Activated CD8-positive, alpha-beta memory T cell treated with anti-CD3 and anti-CD28 coated beads, Interleukin-2, amount 10 ng/mL, durations not matched to agents 7 days and 5 days (primary cell): ENCODE measurements at regions of chr3 and their contacts with region 1.

Region 1: DNA sequence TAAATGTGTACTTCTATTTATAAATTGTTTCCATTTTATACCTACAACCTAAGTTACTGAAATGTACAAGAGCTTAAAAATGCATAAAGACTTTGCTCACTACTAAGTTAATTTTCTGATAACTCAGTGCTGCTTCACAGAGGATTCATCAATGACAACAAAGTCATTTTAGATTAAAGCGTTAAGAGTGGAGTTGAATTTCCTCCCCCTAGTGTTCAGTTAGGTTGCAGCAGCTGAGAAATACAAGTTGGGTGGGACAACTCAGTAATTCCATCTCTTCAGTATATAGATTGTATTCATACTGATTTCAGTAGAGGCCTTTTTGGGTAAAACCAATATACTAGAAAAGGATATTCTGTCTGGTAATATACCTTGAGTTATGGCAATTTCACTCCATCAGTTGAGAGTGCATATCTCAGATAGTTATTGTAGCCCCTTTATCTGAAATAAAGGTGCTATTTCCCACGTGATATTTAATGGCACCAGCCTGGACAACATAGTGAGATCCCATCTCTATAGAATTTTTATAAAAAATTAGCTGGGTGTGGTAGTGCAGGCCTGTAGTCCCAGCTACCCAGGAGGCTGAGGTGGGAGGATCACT is 6.9 kb upstream of the RPL35A start:
- DNase-seq: no peak
- ATAC-seq: peak; percentile 86
- H3K4me3 Mint-ChIP-seq: no peak overlapping the region
- H3K27ac Mint-ChIP-seq: no peak overlapping the region
- H3K4me1 Mint-ChIP-seq: peaks cover 5% of the 10 kb centered on the region
- H3K27me3 Mint-ChIP-seq: no peaks in the 10 kb centered on the region

Region 2: GRCh38 chr3:197906023-197906849 is 36.8 kb before region 1 on chr3:
- CTCF ChIA-PET with region 1: interaction called, 41 read pairs
- DNase-seq: peak; percentile 90
- ATAC-seq: peak; percentile 90
- H3K4me3 Mint-ChIP-seq: peak overlapping the region; percentile 22
- H3K27ac Mint-ChIP-seq: peak overlapping the region; percentile 44
- H3K4me1 Mint-ChIP-seq: peaks cover 20% of the 10 kb centered on the region
- H3K27me3 Mint-ChIP-seq: no peaks in the 10 kb centered on the region

Region 3: DNA sequence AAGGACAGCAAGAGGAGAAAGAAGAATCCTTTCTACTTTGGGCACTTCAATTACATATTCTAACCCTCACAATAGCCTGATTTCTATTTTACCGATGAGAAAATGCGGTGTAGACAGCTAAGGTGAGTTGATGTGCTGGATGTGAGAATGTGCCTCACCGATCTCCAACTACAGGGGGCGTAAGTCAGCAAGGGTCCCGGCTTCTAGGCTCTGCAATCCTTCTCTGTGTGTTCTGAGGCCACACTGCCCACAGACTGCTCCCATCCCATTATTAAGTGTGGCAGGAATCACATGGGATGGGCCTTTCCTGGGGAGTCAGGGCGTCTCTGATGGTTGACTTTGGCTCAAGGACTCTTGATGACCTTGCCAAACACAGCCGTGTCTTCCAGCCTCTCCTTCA is 16.6 kb before region 1 on chr3:
- CTCF ChIA-PET with region 1: interaction called, 12 read pairs
- DNase-seq: no peak
- ATAC-seq: no peak
- H3K4me3 Mint-ChIP-seq: no peak overlapping the region
- H3K27ac Mint-ChIP-seq: no peak overlapping the region
- H3K4me1 Mint-ChIP-seq: peaks cover 10% of the 10 kb centered on the region
- H3K27me3 Mint-ChIP-seq: no peaks in the 10 kb centered on the region

Region 4: GRCh38 chr3:197970588-197970987 is 27.5 kb after region 1 on chr3:
- CTCF ChIA-PET with region 1: no interaction called
- DNase-seq: no peak
- ATAC-seq: no peak
- H3K4me3 Mint-ChIP-seq: no peak overlapping the region
- H3K27ac Mint-ChIP-seq: no peak overlapping the region
- H3K4me1 Mint-ChIP-seq: no peaks in the 10 kb centered on the region
- H3K27me3 Mint-ChIP-seq: no peaks in the 10 kb centered on the region